Gastrocnemius medialis (tissue), 4 donors: ENCODE measurements at regions of chr6 and their contacts with region 1.

Region 1: GRCh38 chr6:33579828-33580714 is at the start of gene BAK1:
- DNase-seq: peak; percentile 82 to 84
- ATAC-seq: peak; percentile 90 to 92
- H3K4me3 ChIP-seq: peak within 1 kb of the TSS; percentile 83 to 89 (median 84)
- H3K27ac ChIP-seq: peak within 1 kb of the TSS; percentile 84 to 87 (median 85)
- H3K4me1 ChIP-seq: peaks cover 18% of the 10 kb centered on the region in 2 donors
- H3K27me3 ChIP-seq: no peaks in the 10 kb centered on the region
- CTCF ChIP-seq: peak in 3 of 5 experiments; percentile 39 to 56 (median 52)
- POLR2A ChIP-seq: peak; percentile 63
- total RNA-seq, gene BAK1: 5.8 to 11.7 (median 8.2) TPM

Region 2: DNA sequence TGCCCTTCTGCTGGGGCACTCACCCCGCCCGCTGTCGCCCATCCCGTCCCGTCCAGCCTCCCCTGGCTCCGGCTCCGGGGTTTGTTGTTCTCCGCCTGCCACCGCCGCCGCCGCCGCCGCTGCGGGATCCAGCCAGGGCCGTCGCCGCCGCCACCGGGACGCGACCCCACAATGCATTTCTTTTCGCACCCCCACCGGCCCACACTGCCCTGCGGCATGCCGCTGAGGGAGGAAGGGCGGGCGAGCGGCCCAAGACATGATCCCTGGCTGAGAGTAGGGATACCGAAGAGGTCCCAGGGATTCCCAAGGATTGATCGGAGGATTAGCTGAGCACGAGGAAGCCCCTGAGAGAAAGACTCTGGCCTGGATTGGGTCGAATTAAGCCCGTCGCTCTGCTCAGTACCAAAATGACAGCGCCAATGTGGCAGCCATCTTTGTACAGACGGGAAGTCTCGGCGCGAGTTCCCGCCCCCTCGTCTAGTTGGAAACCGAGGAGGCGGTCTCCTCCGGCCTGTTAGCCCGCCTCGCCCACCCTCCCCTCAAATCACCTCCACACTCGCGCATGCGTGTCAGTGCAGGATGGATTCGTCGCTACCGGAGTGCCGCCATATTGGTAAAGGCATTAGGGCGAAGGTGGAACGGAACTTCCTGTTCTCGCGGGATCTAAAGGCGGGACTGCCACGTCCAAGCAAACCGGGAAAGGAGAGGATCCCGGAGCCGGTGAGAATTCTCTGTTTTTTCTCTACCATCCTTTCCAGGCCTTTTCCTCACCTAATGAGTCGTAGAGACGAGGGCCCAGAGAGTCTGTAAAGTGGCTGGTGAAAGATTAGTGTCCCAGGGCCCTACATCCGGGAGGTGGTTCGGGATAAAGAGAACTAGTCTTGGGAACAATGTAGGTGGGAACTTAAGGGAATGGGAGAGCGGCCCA is 379.6 kb before region 1 on chr6 and contains the starts of genes RXRB and SLC39A7:
- in situ Hi-C with region 1: no loop called
- intact Hi-C with region 1: no loop called
- DNase-seq: peak; percentile 99
- ATAC-seq: peak; percentile 81 to 86
- H3K4me3 ChIP-seq: peak within 1 kb of the TSS; percentile 84 to 98 (median 86)
- H3K27ac ChIP-seq: peak within 1 kb of the TSS; percentile 94 to 98 (median 96)
- H3K4me1 ChIP-seq: peaks cover 44 to 52% of the 10 kb centered on the region in 2 donors
- H3K27me3 ChIP-seq: no peaks in the 10 kb centered on the region
- CTCF ChIP-seq: peak in 1 of 5 experiments; percentile 20
- POLR2A ChIP-seq: peak; percentile 61 to 71
- total RNA-seq, gene RXRB: 20.8 to 38.4 (median 24.6) TPM
- total RNA-seq, gene SLC39A7: 21.9 to 45.4 (median 26.2) TPM

Region 3: DNA sequence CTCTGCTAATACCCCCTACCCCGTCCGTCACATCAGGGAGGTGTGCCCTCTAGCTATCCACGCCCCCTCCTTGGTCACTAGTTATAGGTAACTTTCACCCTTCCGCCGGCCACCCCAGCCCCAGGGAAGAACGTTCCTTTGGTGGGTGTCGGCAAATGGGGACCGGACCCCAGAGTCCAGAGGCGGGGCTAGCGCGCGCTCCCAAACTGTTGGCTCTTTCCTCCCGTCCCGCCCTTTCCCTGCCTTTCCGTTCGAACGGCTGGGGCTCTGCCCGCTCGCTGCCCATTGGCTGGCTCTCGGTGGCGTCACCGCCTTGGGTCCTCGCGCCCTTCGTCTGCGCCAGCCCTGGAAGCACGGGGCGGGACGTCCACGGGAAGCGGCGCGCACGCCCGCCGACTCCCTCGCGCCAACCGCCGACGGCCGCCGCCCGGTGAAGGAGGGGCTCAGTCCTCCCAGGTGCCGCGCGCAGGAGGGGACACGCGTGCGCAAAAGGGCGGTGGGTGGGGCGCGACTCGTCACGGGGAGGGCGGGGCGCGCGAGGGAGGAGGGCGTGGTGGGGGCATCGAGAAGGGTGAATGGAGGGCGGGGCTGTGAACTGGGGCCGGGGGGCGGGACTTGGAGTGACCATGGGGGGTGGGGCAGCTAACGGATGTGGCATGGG is 169.9 kb before region 1 on chr6:
- in situ Hi-C with region 1: no loop called
- intact Hi-C with region 1: no loop called
- DNase-seq: peak; percentile 96 to 97
- ATAC-seq: peak; percentile 87 to 88
- H3K4me3 ChIP-seq: peak overlapping the region; percentile 70 to 100 (median 98)
- H3K27ac ChIP-seq: peak overlapping the region; percentile 99 to 100 (median 99)
- H3K4me1 ChIP-seq: peaks cover 9 to 18% of the 10 kb centered on the region in 2 donors
- H3K27me3 ChIP-seq: no peaks in the 10 kb centered on the region
- CTCF ChIP-seq: no peak
- POLR2A ChIP-seq: peak; percentile 54 to 73

Region 4: DNA sequence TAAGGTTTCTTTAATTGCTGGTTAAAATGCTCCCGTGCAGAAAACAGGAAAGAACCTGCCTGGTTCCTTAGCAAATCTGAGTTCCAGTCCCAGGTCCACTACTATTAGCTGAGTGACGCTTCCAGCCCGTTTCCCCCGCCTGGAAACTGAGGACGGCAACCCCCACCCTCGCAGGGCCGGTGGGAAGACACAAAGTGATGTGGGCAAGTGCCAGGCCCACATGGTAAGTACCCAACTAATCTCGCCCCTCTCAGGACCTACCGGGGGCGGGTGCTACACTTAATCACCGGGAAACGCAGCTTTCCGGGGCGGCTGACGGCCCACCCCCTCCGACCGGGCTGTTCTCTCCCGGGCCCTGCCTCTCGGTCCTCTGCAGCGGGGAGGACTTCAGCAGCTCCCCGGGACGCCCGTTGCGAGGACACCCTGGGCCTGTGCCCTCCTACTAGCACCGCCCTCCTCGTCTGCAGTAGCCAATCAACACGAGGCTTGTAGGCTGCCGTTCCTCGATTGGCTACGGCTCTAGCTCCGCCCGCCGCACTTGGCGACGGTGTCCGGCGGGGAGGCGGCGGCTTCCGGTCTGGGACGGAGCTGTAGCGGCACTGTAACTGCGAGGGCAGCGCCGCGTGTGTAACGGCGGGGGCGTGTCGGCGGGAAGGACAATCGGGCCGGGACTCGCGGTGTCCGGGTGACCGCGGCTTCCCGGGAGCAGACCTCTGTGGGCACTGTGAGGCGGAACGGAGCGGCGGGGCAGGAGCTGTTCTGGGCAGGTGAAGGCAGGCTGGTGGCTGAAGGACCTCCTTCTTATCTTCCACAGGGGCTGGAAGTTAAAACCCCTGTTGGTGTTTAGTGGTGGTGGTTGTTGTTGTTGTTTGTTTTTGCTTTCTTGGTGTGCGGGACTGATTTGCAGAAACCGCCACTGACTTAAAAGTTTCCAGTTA is 125.8 kb before region 1 on chr6 and contains the start of gene ZBTB9:
- in situ Hi-C with region 1: no loop called
- intact Hi-C with region 1: loop called (anchors 10 kb)
- DNase-seq: peak; percentile 97
- ATAC-seq: peak; percentile 99
- H3K4me3 ChIP-seq: peak within 1 kb of the TSS; percentile 70 to 87 (median 86)
- H3K27ac ChIP-seq: peak within 1 kb of the TSS; percentile 80 to 87 (median 84)
- H3K4me1 ChIP-seq: peaks cover 10 to 18% of the 10 kb centered on the region in 2 donors
- H3K27me3 ChIP-seq: no peaks in the 10 kb centered on the region
- CTCF ChIP-seq: peak in 1 of 5 experiments; percentile 8
- POLR2A ChIP-seq: peak; percentile 69 to 86
- total RNA-seq, gene ZBTB9: 0.82 to 2.2 (median 1.2) TPM

Region 5: GRCh38 chr6:33633462-33634158 is 53.5 kb after region 1 on chr6:
- in situ Hi-C with region 1: loop called in 1 of 4 experiments (anchors 10 kb)
- intact Hi-C with region 1: no loop called
- DNase-seq: peak; percentile 27 to 61
- ATAC-seq: peak; percentile 79 to 87
- H3K4me3 ChIP-seq: peak overlapping the region; percentile 51 to 78 (median 54)
- H3K27ac ChIP-seq: peak overlapping the region; percentile 12 to 59 (median 41)
- H3K4me1 ChIP-seq: peaks cover 13 to 20% of the 10 kb centered on the region in 2 donors
- H3K27me3 ChIP-seq: no peaks in the 10 kb centered on the region
- CTCF ChIP-seq: no peak
- POLR2A ChIP-seq: peak in 1 of 2 donors; percentile 9

Region 6: GRCh38 chr6:33700391-33701050 is 120.5 kb after region 1 on chr6:
- in situ Hi-C with region 1: loop called (anchors 5 to 10 kb)
- intact Hi-C with region 1: loop called (anchors 1 kb)
- DNase-seq: peak; percentile 58 to 61
- ATAC-seq: peak; percentile 81
- H3K4me3 ChIP-seq: no peak overlapping the region
- H3K27ac ChIP-seq: peak overlapping the region in 3 of 4 donors; percentile 12 to 54 (median 35)
- H3K4me1 ChIP-seq: peaks cover 21 to 40% of the 10 kb centered on the region in 2 donors
- H3K27me3 ChIP-seq: no peaks in the 10 kb centered on the region
- CTCF ChIP-seq: peak; percentile 23 to 77 (median 69)
- POLR2A ChIP-seq: no peak

Region 7: DNA sequence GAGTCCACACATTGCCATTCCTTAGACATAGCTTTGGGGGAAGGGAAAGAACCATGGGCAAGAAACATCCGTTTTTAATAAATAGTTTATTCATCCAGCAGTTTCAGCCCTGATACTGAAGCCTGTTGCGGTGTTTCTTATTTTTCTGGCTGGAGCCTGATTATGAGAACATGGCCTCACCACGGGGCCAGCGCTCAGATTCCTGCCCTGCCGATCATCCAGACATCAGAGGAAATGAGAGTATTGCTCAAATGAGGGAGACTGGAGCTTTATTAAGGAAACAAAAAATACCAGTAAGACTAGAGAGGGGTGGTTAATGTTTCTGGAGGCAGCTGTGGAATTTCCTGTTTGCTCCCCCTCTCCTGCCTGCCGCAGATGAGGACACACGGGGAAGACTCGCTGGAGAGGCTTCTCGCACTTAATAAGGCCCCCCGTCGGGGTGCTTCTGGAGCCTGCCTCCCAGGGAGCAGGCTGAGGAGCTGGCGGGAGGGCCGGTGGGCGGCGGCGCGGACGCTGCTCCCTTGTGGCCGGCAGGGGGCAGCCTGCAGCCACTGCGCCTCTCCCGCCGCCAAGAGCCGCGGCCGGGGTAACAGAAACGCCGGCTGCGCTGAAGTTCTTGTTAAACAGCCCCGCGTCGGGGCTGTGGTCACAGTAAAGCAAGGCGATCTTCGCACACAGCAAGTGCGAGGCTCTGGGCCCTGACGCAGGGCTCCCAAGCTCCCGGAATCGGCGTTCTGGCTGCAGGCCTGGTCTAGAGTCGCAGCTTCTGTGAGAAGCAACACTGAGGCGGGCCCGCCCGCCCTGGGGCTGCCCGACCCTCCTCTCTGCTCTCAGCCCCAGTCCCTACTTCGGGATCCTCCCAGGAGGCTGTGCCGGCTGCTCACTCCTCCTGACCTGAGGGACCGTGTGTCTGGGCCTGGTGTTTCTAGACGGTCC is 191.3 kb after region 1 on chr6:
- in situ Hi-C with region 1: loop called in 2 of 4 experiments (anchors 10 kb)
- intact Hi-C with region 1: no loop called
- DNase-seq: peak in 1 of 2 donors; percentile 62
- ATAC-seq: peak; percentile 37 to 73
- H3K4me3 ChIP-seq: peak overlapping the region in 1 of 4 donors; percentile 22
- H3K27ac ChIP-seq: peak overlapping the region; percentile 66 to 82 (median 70)
- H3K4me1 ChIP-seq: peaks cover 32 to 40% of the 10 kb centered on the region in 2 donors
- H3K27me3 ChIP-seq: no peaks in the 10 kb centered on the region
- CTCF ChIP-seq: peak; percentile 80 to 97 (median 93)
- POLR2A ChIP-seq: no peak

Region 8: GRCh38 chr6:34154668-34155447 is 574.8 kb after region 1 on chr6:
- in situ Hi-C with region 1: no loop called
- intact Hi-C with region 1: loop called (anchors 10 kb)
- DNase-seq: no peak
- ATAC-seq: peak in 1 of 2 donors; percentile 64
- H3K4me3 ChIP-seq: peak overlapping the region in 2 of 4 donors; percentile 21 to 28
- H3K27ac ChIP-seq: no peak overlapping the region
- H3K4me1 ChIP-seq: peaks cover 0 to 7% of the 10 kb centered on the region in 2 donors
- H3K27me3 ChIP-seq: peaks cover 14 to 28% (median 20%) of the 10 kb centered on the region in 3 donors
- CTCF ChIP-seq: peak; percentile 86 to 97 (median 90)
- POLR2A ChIP-seq: no peak